ENCODE measurements at regions of chr1 and their contacts with region 1.

Region 1: GRCh38 chr1:205805082-205805712 is 7.8 kb downstream of the SLC41A1 start:
- DNase-seq: peak; percentile 23
- H3K4me3 Mint-ChIP-seq: no peak overlapping the region
- H3K27ac Mint-ChIP-seq: peak overlapping the region; percentile 67
- H3K4me1 Mint-ChIP-seq: peaks cover 35% of the 10 kb centered on the region
- H3K27me3 Mint-ChIP-seq: no peaks in the 10 kb centered on the region

Region 2: DNA sequence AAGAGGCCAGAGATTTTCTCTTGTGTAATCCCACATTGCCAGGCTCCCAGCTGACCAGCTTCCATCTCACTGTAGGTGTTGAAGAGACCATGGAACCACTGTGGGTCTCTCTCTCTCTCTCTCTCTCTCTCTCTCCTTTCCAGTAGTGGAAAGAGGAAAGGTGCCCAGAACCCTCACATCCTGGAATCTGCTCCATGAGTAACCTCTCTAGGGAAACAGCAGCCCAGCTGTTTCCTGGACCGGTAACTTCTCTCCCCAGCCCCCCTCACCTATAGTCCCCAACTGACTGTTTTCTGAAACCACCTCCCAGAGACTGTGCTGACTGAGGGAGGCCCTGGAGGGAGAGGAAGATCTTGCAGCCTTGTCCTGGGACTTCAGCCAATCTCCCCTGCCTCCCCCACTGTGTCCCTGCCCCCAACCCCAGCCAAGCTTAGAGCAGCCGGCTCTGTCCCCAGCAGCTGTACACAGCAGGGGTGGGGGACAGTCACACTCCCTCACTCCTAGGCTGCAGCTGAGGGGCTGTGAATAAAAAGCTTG is 104.3 kb before region 1 on chr1:
- CTCF ChIA-PET with region 1: no interaction called
- POLR2A ChIA-PET with region 1: no interaction called
- DNase-seq: no peak
- H3K4me3 Mint-ChIP-seq: no peak overlapping the region
- H3K27ac Mint-ChIP-seq: peak overlapping the region; percentile 50
- H3K4me1 Mint-ChIP-seq: peaks cover 5% of the 10 kb centered on the region
- H3K27me3 Mint-ChIP-seq: peaks cover 11% of the 10 kb centered on the region

Region 3: GRCh38 chr1:205817364-205817763 is 12.2 kb after region 1 on chr1:
- CTCF ChIA-PET with region 1: interaction called, 10 read pairs
- POLR2A ChIA-PET with region 1: no interaction called
- DNase-seq: no peak
- H3K4me3 Mint-ChIP-seq: no peak overlapping the region
- H3K27ac Mint-ChIP-seq: no peak overlapping the region
- H3K4me1 Mint-ChIP-seq: peaks cover 8% of the 10 kb centered on the region
- H3K27me3 Mint-ChIP-seq: peaks cover 12% of the 10 kb centered on the region